Mucosa of descending colon (tissue), 3 donors: ENCODE measurements at regions of chr2 and their contacts with region 1.

Region 1: GRCh38 chr2:175690113-175690837 is 311.8 kb downstream of the LNPK start:
- DNase-seq: peak in 1 of 3 donors; percentile 79
- ATAC-seq: peak; percentile 63
- H3K4me3 ChIP-seq: no peak overlapping the region
- H3K4me1 ChIP-seq: no peaks in the 10 kb centered on the region
- CTCF ChIP-seq: peak; percentile 45

Region 2: GRCh38 chr2:176079831-176080539 is 389.7 kb after region 1 on chr2:
- intact Hi-C with region 1: loop called in 1 of 2 experiments (anchors 5 kb)
- DNase-seq: peak in 2 of 3 donors; percentile 44 to 59
- ATAC-seq: peak; percentile 76
- H3K4me3 ChIP-seq: no peak overlapping the region
- H3K4me1 ChIP-seq: peaks cover 15% of the 10 kb centered on the region
- CTCF ChIP-seq: peak; percentile 54

Region 3: DNA sequence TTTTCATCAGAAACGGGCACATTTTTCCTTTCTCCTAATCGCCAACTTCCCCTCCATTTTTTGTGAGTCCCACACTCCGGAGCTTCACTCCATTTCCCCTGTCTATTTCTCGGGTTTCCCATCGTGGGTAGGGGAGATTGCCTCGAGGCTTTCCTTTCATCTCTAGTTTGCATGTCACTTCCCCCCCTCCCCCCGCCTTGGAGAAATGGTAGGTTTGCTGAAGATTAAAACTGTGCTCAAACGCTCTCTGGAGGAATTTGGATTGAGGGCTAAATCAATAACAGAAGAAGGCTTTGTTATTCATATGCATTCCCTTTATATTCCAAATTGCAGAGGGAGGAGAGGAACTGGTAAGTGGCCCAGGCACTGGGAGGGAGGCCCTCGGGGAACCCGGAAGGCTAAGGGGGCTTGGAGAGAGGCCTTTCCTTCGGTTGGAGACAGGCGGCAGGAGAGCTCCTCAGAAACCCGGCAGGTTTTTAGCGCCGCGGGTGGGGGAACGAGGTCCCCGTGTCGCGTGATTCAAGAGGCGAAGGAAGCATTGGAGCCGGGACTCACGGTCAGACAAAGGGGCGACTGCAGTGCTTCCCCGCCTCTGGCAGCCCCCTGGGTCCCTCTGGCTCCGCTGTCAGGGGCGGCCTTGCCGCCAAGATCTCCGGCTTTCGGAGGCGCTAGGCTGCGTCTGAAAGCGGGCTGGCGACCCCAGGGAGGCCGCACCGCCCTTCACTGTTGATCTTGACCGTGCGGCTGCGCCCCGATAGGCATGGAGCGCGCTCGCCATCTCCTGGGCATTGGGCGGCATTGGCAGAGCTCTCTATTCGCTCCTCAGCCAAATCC is 406.9 kb after region 1 on chr2:
- intact Hi-C with region 1: loop called in 1 of 2 experiments (anchors 5 kb)
- DNase-seq: peak; percentile 71 to 80 (median 74)
- ATAC-seq: peak; percentile 90
- H3K4me3 ChIP-seq: no peak overlapping the region
- H3K4me1 ChIP-seq: peaks cover 24% of the 10 kb centered on the region
- CTCF ChIP-seq: peak; percentile 85